ENCODE measurements at regions of chr9 and their contacts with region 1.

Region 1: DNA sequence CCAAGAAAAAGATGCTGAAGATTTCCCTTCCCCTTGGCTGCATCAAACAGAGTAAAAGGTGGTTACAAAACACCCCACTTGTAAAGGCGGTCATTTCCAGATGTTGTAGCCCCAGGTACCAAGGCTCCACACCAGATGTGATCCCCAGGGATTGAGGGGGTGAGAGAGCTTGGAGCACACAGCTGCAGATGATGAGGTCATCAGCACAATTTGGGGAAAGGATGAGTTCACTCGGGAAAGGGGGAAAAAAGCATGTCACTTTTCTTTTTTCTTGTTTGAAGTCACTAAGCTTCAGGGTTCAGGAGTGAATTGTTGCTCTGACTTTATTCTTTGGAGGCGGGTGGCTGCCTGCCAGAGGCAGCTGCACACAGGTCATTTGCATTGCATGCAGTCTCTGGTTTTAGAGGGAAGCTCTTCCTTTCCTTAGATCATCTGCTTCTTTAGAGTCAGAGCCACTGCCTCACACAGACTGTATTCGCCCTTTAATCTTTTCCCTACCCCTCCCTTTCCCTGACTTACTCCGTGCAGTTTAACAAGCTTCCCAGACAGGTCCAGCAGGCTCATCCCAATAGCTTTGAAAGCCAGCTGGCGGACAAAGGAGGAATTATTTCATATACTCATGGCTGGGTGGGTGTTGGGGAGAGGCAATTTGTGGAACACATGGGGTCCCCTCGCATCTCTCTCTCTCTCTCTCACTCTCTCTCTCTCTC is 409.3 kb upstream of the SLC24A2 start:
- DNase-seq: no peak
- H3K4me3 ChIP-seq: no peak overlapping the region
- H3K27ac ChIP-seq: no peak overlapping the region
- H3K27me3 ChIP-seq: no peaks in the 10 kb centered on the region
- CTCF ChIP-seq: no peak

Region 2: GRCh38 chr9:19879062-19879461 is 319.1 kb before region 1 on chr9:
- in situ Hi-C with region 1: no loop called
- DNase-seq: no peak
- H3K4me3 ChIP-seq: no peak overlapping the region
- H3K27ac ChIP-seq: no peak overlapping the region
- H3K27me3 ChIP-seq: no peaks in the 10 kb centered on the region
- CTCF ChIP-seq: no peak

Region 3: GRCh38 chr9:20356403-20357035 is 158.4 kb after region 1 on chr9:
- in situ Hi-C with region 1: loop called (anchors 25 kb)
- DNase-seq: peak; percentile 77
- H3K4me3 ChIP-seq: peak overlapping the region; percentile 26
- H3K27ac ChIP-seq: peak overlapping the region; percentile 74
- H3K27me3 ChIP-seq: no peaks in the 10 kb centered on the region
- CTCF ChIP-seq: peak; percentile 76